ENCODE measurements at regions of chr3 and their contacts with region 1.

Region 1: GRCh38 chr3:38317155-38317759 is 29.3 kb upstream of the XYLB start:
- DNase-seq: peak; percentile 14
- ATAC-seq: no peak
- H3K4me3 ChIP-seq: no peak overlapping the region
- H3K27ac ChIP-seq: no peak overlapping the region
- H3K4me1 ChIP-seq: no peaks in the 10 kb centered on the region
- H3K27me3 ChIP-seq: no peaks in the 10 kb centered on the region
- CTCF ChIP-seq: no peak

Region 2: DNA sequence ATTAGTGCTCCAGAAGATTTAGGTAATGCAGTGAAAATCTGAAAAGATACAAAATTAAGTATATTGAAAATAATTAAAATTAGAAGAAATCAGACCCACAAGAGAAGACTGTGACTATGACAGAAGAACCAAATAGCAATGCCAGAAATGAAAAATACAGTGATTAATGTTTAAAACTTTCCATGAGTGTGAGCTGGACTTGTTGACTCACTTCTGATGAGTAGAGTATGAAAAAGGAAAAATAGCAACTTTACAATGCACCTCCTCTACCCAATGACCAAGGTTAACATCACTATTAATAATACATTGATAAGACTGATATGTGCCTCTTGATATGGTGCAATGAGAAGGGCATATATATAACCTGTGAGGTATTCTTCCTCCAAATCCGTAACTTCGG is 91.0 kb before region 1 on chr3:
- CTCF ChIA-PET with region 1: no interaction called
- POLR2A ChIA-PET with region 1: no interaction called
- intact Hi-C with region 1: no loop called
- DNase-seq: peak; percentile 69
- ATAC-seq: peak; percentile 63
- H3K4me3 ChIP-seq: no peak overlapping the region
- H3K27ac ChIP-seq: no peak overlapping the region; the same call in 1 of the 2 replicates
- H3K4me1 ChIP-seq: peaks cover 46% of the 10 kb centered on the region
- H3K27me3 ChIP-seq: no peaks in the 10 kb centered on the region
- CTCF ChIP-seq: no peak

Region 3: GRCh38 chr3:38265604-38266307 is 51.5 kb before region 1 on chr3 and contains the start of gene SLC22A13:
- CTCF ChIA-PET with region 1: interaction called, 14 read pairs
- POLR2A ChIA-PET with region 1: no interaction called
- intact Hi-C with region 1: no loop called
- DNase-seq: no peak
- ATAC-seq: no peak
- H3K4me3 ChIP-seq: no peak within 1 kb of the TSS
- H3K27ac ChIP-seq: no peak within 1 kb of the TSS
- H3K4me1 ChIP-seq: no peaks in the 10 kb centered on the region
- H3K27me3 ChIP-seq: no peaks in the 10 kb centered on the region
- CTCF ChIP-seq: no peak
- total RNA-seq, gene SLC22A13: 0.73 TPM in 1 of 2 replicates, not detected in the other